ENCODE measurements at regions of chr9 and their contacts with region 1.

Region 1: GRCh38 chr9:7467186-7467585 is 332.4 kb downstream of the DMAC1 start:
- DNase-seq: no peak
- H3K4me3 ChIP-seq: no peak overlapping the region
- H3K27ac ChIP-seq: no peak overlapping the region
- H3K4me1 ChIP-seq: no peaks in the 10 kb centered on the region
- H3K27me3 ChIP-seq: no peaks in the 10 kb centered on the region
- CTCF ChIP-seq: no peak
- POLR2A ChIP-seq: no peak

Region 2: DNA sequence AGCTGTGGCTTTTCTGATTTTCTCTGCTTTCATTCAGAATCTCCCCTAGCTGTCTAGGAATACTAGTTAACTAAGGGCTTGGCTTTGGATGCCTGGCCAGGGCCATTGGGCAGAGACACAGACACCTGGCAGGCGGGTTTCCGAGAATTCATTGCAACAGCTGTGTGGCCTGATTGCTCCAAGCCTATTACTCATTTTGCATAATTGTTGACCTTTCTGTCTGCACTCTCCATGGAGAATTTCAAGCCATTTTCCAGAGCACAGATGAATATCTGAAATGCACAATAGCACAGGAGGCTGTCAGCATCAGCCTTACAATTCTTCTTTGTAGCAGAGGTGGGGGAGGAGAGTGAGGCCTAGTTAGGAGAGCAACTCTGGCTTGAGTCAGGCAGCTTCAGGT is 21.9 kb after region 1 on chr9:
- CTCF ChIA-PET with region 1: no interaction called
- POLR2A ChIA-PET with region 1: no interaction called
- dilution Hi-C with region 1: no loop called
- intact Hi-C with region 1: loop called (anchors 1 kb)
- DNase-seq: no peak
- H3K4me3 ChIP-seq: no peak overlapping the region
- H3K27ac ChIP-seq: no peak overlapping the region
- H3K4me1 ChIP-seq: no peaks in the 10 kb centered on the region
- H3K27me3 ChIP-seq: no peaks in the 10 kb centered on the region
- CTCF ChIP-seq: no peak
- POLR2A ChIP-seq: no peak

Measured in endothelial cell of umbilical vein (primary cell).